ENCODE measurements at regions of chr17 and their contacts with region 1.

Region 1: GRCh38 chr17:2592971-2593820 is at the start of gene PAFAH1B1:
- DNase-seq: peak; percentile 95
- H3K4me3 Mint-ChIP-seq: peak within 1 kb of the TSS; percentile 90
- H3K27ac Mint-ChIP-seq: peak within 1 kb of the TSS; percentile 92
- H3K4me1 Mint-ChIP-seq: peaks cover 33% of the 10 kb centered on the region
- H3K27me3 Mint-ChIP-seq: no peaks in the 10 kb centered on the region
- total RNA-seq, gene PAFAH1B1: 142 to 145 TPM

Region 2: DNA sequence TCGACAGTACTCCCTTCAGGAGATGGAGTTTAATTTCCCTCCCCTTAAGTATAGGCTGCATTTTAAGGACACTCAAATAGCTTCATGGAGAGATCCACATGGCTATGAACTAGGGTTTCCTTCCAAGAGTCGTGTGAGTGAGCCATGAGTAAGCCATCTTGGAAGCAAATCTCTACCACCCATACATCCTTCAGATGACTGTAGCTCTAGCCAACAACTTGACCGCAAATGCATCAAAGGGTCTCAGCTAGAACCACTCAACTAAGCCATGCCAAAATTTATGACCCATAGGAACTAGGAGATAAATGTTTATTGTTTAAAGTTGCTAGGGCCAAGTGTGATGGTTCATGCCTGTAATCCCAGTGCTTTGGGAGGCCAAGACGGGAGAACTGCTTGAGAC is 124.9 kb before region 1 on chr17:
- CTCF ChIA-PET with region 1: no interaction called
- intact Hi-C with region 1: no loop called
- DNase-seq: no peak
- H3K4me3 Mint-ChIP-seq: no peak overlapping the region
- H3K27ac Mint-ChIP-seq: no peak overlapping the region
- H3K4me1 Mint-ChIP-seq: no peaks in the 10 kb centered on the region
- H3K27me3 Mint-ChIP-seq: no peaks in the 10 kb centered on the region

Region 3: GRCh38 chr17:2511462-2512369 is 81.5 kb before region 1 on chr17 and contains the start of gene METTL16:
- CTCF ChIA-PET with region 1: no interaction called
- intact Hi-C with region 1: loop called (anchors 1 kb)
- DNase-seq: peak; percentile 100
- H3K4me3 Mint-ChIP-seq: no peak within 1 kb of the TSS
- H3K27ac Mint-ChIP-seq: peak within 1 kb of the TSS; percentile 47
- H3K4me1 Mint-ChIP-seq: peaks cover 18% of the 10 kb centered on the region
- H3K27me3 Mint-ChIP-seq: no peaks in the 10 kb centered on the region
- total RNA-seq, gene METTL16: 44.8 to 45.5 TPM

Region 4: DNA sequence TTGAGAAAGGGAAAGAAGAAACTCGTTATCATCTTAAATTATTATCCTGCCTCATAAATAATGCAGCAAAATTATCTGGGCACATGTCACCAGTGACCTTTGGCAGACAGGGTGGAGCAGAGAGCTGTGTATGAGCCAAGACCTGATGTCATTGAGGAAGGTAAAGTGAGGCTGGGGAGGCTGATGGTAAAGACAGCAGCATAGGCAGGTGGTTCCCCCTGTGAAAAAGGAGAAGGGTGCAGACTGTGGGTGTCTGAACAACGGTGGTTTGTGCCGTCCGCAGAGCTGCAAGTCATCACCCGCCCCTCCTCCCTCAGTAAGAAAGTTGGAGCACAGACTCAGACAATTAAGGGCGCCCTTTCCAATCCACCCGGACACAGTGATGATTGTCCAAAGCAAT is 50.7 kb before region 1 on chr17:
- CTCF ChIA-PET with region 1: no interaction called
- intact Hi-C with region 1: no loop called
- DNase-seq: no peak
- H3K4me3 Mint-ChIP-seq: no peak overlapping the region
- H3K27ac Mint-ChIP-seq: no peak overlapping the region
- H3K4me1 Mint-ChIP-seq: peaks cover 2% of the 10 kb centered on the region
- H3K27me3 Mint-ChIP-seq: no peaks in the 10 kb centered on the region

Region 5: GRCh38 chr17:2608350-2608919 is 15.2 kb after region 1 on chr17:
- CTCF ChIA-PET with region 1: no interaction called
- intact Hi-C with region 1: no loop called
- DNase-seq: no peak
- H3K4me3 Mint-ChIP-seq: no peak overlapping the region
- H3K27ac Mint-ChIP-seq: no peak overlapping the region
- H3K4me1 Mint-ChIP-seq: peaks cover 55% of the 10 kb centered on the region
- H3K27me3 Mint-ChIP-seq: no peaks in the 10 kb centered on the region

Region 6: DNA sequence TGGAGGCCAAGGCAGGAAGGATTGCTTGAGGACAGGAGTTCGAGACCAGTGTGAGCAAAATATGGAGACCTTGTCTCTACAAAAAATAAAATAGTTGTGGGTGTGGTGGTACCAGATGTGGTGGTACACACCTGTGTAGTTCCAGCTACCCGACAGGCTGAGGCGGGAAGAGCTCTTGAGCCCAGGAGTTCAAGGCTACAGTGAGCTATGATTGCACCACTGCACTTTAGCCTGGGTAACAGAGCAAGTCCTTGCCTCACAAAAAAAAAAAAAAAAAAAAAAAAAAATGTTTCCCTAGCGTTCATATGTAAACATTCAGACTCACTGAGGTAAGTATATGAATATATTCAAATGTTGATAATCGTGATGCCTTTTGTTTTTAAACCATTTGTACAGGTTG is 78.8 kb after region 1 on chr17:
- CTCF ChIA-PET with region 1: interaction called, 3 read pairs
- intact Hi-C with region 1: loop called (anchors 1 kb)
- DNase-seq: no peak
- H3K4me3 Mint-ChIP-seq: no peak overlapping the region
- H3K27ac Mint-ChIP-seq: no peak overlapping the region
- H3K4me1 Mint-ChIP-seq: peaks cover 6% of the 10 kb centered on the region
- H3K27me3 Mint-ChIP-seq: no peaks in the 10 kb centered on the region

Region 7: GRCh38 chr17:2711601-2712299 is 118.6 kb after region 1 on chr17 and contains the start of gene CLUH:
- CTCF ChIA-PET with region 1: no interaction called
- intact Hi-C with region 1: loop called (anchors 1 kb)
- DNase-seq: peak; percentile 96
- H3K4me3 Mint-ChIP-seq: peak within 1 kb of the TSS; percentile 88
- H3K27ac Mint-ChIP-seq: peak within 1 kb of the TSS; percentile 82
- H3K4me1 Mint-ChIP-seq: peaks cover 32% of the 10 kb centered on the region
- H3K27me3 Mint-ChIP-seq: no peaks in the 10 kb centered on the region
- total RNA-seq, gene CLUH: 72.7 to 81.4 TPM

Region 8: GRCh38 chr17:2814481-2815341 is 221.5 kb after region 1 on chr17:
- CTCF ChIA-PET with region 1: no interaction called
- intact Hi-C with region 1: loop called (anchors 10 kb)
- DNase-seq: peak; percentile 94
- H3K4me3 Mint-ChIP-seq: peak overlapping the region; percentile 43
- H3K27ac Mint-ChIP-seq: no peak overlapping the region
- H3K4me1 Mint-ChIP-seq: peaks cover 24% of the 10 kb centered on the region
- H3K27me3 Mint-ChIP-seq: peaks cover 9% of the 10 kb centered on the region

Region 9: DNA sequence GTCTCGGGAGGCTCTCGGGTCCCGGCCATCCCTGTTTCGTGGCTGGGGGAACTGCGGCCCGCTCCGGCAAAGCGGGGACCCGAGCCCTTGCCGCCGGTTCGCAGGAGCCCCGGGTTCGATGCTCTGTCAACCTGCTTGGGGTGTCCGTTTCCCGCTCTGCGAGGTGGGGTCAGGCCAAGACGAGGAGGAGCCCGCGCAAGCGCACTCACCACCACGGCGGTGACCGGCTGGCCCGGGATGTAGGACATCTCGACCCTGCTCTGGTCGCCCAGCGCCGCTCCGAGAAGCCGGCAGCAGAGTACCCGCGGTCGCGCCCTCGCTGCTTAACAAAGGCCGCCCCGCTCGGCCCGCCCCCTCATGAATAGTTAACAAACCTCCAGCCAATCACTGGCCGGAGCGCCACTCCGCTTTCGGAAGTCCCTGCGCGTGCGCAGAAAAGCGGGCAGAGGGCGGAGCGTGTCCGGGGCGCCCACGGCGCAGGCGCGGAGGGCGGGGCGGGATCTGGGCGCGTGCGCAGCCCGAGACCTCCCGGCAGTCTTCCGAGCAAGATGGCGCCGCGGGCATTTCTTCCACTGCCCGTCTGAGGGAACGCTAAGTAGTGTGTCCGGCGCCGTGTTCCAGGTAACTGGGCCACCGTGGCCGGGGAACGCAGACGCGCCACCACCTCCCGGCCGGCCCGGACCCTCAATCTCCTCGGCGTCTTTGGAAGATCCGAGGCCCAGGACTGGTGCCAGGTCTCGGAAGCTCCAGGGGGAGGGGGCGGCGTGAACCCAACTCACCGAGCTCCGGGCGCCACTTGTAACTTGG is 1075.3 kb after region 1 on chr17 and contains the starts of genes EMC6 and TAX1BP3:
- CTCF ChIA-PET with region 1: no interaction called
- intact Hi-C with region 1: loop called (anchors 5 kb)
- DNase-seq: peak; percentile 98
- H3K4me3 Mint-ChIP-seq: peak within 1 kb of the TSS; percentile 93
- H3K27ac Mint-ChIP-seq: peak within 1 kb of the TSS; percentile 79
- H3K4me1 Mint-ChIP-seq: peaks cover 14% of the 10 kb centered on the region
- H3K27me3 Mint-ChIP-seq: no peaks in the 10 kb centered on the region
- total RNA-seq, gene EMC6: 41.8 to 44.0 TPM
- total RNA-seq, gene TAX1BP3: 17.7 to 19.3 TPM